Kidney (tissue), 22 donors: ENCODE measurements at regions of chr15 and their contacts with region 1.

Region 1: GRCh38 chr15:25510146-25510545 is 71.3 kb upstream of the UBE3A start:
- DNase-seq: no peak
- H3K4me3 ChIP-seq: no peak overlapping the region
- H3K27ac ChIP-seq: no peak overlapping the region
- H3K4me1 ChIP-seq: no peaks in the 10 kb centered on the region
- H3K27me3 ChIP-seq: no peaks in the 10 kb centered on the region
- CTCF ChIP-seq: no peak

Region 2: DNA sequence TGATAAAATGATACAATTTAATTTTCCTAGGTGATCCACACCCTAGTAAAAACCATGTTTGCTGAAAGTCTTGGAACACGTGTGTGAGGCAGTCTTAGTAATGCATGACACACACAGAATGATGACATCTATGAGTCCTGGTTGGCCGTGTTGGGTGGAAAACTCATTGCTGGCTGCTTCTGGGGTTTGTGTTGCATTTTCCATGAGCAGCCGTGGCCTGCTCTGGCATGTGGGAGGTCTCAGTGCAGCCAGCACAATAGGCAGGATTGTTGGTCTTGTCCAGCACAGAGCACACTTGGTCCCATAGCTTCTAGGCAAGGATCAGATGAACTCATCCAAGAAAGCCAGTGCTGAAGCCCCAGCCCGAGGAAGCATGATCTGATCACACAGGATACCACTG is 101.5 kb after region 1 on chr15:
- intact Hi-C with region 1: no loop called
- DNase-seq: no peak
- H3K4me3 ChIP-seq: no peak overlapping the region
- H3K27ac ChIP-seq: no peak overlapping the region
- H3K4me1 ChIP-seq: no peaks in the 10 kb centered on the region
- H3K27me3 ChIP-seq: no peaks in the 10 kb centered on the region
- CTCF ChIP-seq: no peak

Region 3: GRCh38 chr15:25684521-25685431 is 174.6 kb after region 1 on chr15:
- intact Hi-C with region 1: no loop called
- DNase-seq: peak in 3 of 5 donors; percentile 57 to 75 (median 62)
- H3K4me3 ChIP-seq: no peak overlapping the region
- H3K27ac ChIP-seq: no peak overlapping the region
- H3K4me1 ChIP-seq: no peaks in the 10 kb centered on the region
- H3K27me3 ChIP-seq: no peaks in the 10 kb centered on the region
- CTCF ChIP-seq: no peak

Region 4: GRCh38 chr15:26260517-26261133 is 750.5 kb after region 1 on chr15:
- intact Hi-C with region 1: loop called (anchors 5 kb)
- DNase-seq: peak in 4 of 5 donors; percentile 51 to 69 (median 62)
- H3K4me3 ChIP-seq: no peak overlapping the region
- H3K27ac ChIP-seq: no peak overlapping the region
- H3K4me1 ChIP-seq: no peaks in the 10 kb centered on the region
- H3K27me3 ChIP-seq: no peaks in the 10 kb centered on the region
- CTCF ChIP-seq: peak; percentile 60